ENCODE measurements at regions of chr12 and their contacts with region 1.

Region 1: DNA sequence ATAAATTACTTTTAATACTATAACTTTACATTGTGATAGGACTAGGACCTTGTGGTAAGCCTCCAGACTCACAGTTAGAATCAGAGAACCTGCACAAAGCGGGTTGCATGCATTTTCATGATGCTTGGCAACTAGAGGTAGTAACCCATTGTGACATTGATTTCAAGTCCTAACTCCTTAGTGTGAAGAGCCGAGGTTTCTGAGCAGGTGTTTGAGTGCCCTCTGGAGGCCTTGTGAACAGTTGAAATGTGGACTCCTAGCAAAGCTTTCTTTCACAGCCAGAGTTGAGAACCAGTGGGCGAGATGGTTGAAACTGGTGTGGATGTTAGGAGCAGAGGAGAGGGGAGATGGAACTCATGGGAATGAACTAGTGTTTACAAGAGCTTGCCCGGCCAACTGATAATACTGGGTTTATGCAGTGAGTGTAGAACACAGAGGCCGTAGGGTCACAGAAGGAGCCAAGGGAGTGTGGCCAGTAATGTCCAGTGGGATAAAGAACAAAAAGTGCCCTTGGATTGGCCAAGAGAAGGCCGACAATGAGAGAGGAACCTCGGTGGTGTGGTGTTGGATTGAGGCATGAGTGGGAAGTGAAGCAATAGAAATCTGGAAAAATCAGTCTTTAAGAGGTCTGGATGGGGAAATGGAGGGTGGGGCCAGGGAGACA is 10.9 kb downstream of the ZNF664 start:
- DNase-seq: peak; percentile 49 to 51
- H3K4me3 ChIP-seq: no peak overlapping the region
- H3K4me3 Mint-ChIP-seq: no peak overlapping the region
- H3K27ac Mint-ChIP-seq: no peak overlapping the region
- H3K4me1 ChIP-seq: peaks cover 3% of the 10 kb centered on the region; the same call in 1 of the 2 replicates
- H3K4me1 Mint-ChIP-seq: peaks cover 7% of the 10 kb centered on the region
- H3K27me3 ChIP-seq: no peaks in the 10 kb centered on the region
- H3K27me3 Mint-ChIP-seq: no peaks in the 10 kb centered on the region
- CTCF ChIP-seq: peak; percentile 53 to 73

Region 2: GRCh38 chr12:123761841-123762714 is 221.9 kb before region 1 on chr12 and contains the start of gene DNAH10:
- CTCF ChIA-PET with region 1: no interaction called
- POLR2A ChIA-PET with region 1: no interaction called
- intact Hi-C with region 1: no loop called
- DNase-seq: peak; percentile 87 to 90
- H3K4me3 ChIP-seq: peak within 1 kb of the TSS; percentile 84
- H3K4me3 Mint-ChIP-seq: peak within 1 kb of the TSS; percentile 68
- H3K27ac Mint-ChIP-seq: no peak within 1 kb of the TSS
- H3K4me1 ChIP-seq: peaks cover 6% of the 10 kb centered on the region
- H3K4me1 Mint-ChIP-seq: no peaks in the 10 kb centered on the region
- H3K27me3 ChIP-seq: no peaks in the 10 kb centered on the region
- H3K27me3 Mint-ChIP-seq: no peaks in the 10 kb centered on the region
- CTCF ChIP-seq: peak; percentile 61 to 77
- total RNA-seq, gene DNAH10: 0.16 and 0.45 TPM in 2 replicates

Region 3: GRCh38 chr12:123801573-123802178 is 182.3 kb before region 1 on chr12:
- CTCF ChIA-PET with region 1: interaction called, 6 read pairs
- POLR2A ChIA-PET with region 1: no interaction called
- intact Hi-C with region 1: loop called (anchors 2 kb)
- DNase-seq: no peak
- H3K4me3 ChIP-seq: no peak overlapping the region
- H3K4me3 Mint-ChIP-seq: no peak overlapping the region
- H3K27ac Mint-ChIP-seq: no peak overlapping the region
- H3K4me1 ChIP-seq: no peaks in the 10 kb centered on the region
- H3K4me1 Mint-ChIP-seq: no peaks in the 10 kb centered on the region
- H3K27me3 ChIP-seq: no peaks in the 10 kb centered on the region
- H3K27me3 Mint-ChIP-seq: peaks cover 6% of the 10 kb centered on the region
- CTCF ChIP-seq: peak in 1 of 2 experiments; percentile 40

Region 4: DNA sequence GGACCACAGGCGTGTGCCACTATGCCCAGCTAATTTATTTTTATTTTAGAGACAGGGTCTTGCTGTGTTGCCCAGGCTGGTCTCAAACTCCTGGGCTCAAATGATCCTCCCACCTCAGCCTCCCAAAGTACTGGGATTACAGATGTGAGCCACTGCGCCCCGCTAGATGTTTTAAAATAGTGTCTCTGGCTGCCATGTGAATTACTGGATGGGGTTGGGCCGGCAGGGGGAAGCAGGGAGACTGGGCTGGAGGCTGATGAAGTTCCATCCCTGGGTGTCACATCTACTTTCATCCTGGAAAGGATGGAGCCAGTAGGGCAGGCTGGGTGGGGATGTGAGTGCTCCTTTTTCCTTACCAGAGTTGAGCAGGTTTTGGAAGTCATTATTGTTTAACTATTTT is 175.8 kb before region 1 on chr12:
- CTCF ChIA-PET with region 1: no interaction called
- POLR2A ChIA-PET with region 1: no interaction called
- intact Hi-C with region 1: loop called (anchors 1 kb)
- DNase-seq: peak; percentile 49 to 64
- H3K4me3 ChIP-seq: no peak overlapping the region
- H3K4me3 Mint-ChIP-seq: no peak overlapping the region
- H3K27ac Mint-ChIP-seq: no peak overlapping the region
- H3K4me1 ChIP-seq: no peaks in the 10 kb centered on the region
- H3K4me1 Mint-ChIP-seq: no peaks in the 10 kb centered on the region
- H3K27me3 ChIP-seq: no peaks in the 10 kb centered on the region
- H3K27me3 Mint-ChIP-seq: peaks cover 6% of the 10 kb centered on the region
- CTCF ChIP-seq: peak; percentile 53 to 65

Region 5: DNA sequence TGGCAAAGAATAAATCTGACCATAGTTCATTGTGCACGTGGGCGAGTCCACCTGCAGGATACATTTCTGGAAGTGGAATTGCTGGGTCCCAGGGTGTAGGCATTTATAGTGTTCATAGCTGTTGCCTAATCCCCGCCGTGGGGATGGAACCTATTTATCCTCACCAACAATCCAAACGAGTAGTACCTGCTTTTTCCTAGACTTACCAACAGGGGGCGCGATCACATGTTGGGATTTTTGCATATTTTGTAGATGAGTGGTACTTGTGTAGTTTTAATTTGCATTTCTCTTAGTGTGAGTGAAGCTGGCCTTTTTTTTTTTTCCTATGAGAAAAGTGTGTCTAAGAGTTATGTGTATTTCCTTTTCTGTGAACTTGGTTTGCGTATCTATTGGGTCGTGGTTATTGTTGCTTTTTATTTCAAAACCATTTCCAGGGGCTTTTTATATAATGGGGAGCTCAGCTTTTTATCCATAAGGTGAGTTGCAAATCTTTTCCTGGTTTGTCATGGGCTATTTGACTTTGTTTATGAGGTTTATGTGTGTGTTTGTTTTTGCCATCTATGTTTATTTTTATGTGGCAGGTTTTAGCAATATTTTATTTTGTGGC is 78.5 kb before region 1 on chr12:
- CTCF ChIA-PET with region 1: interaction called, 4 read pairs
- POLR2A ChIA-PET with region 1: no interaction called
- intact Hi-C with region 1: loop called (anchors 1 kb)
- DNase-seq: peak; percentile 61 to 64
- H3K4me3 ChIP-seq: no peak overlapping the region
- H3K4me3 Mint-ChIP-seq: no peak overlapping the region
- H3K27ac Mint-ChIP-seq: no peak overlapping the region
- H3K4me1 ChIP-seq: no peaks in the 10 kb centered on the region
- H3K4me1 Mint-ChIP-seq: no peaks in the 10 kb centered on the region
- H3K27me3 ChIP-seq: no peaks in the 10 kb centered on the region
- H3K27me3 Mint-ChIP-seq: no peaks in the 10 kb centered on the region
- CTCF ChIP-seq: peak; percentile 51 to 66

Region 6: GRCh38 chr12:124217508-124218237 is 233.7 kb after region 1 on chr12:
- CTCF ChIA-PET with region 1: no interaction called
- POLR2A ChIA-PET with region 1: no interaction called
- intact Hi-C with region 1: no loop called
- DNase-seq: no peak
- H3K4me3 ChIP-seq: no peak overlapping the region
- H3K4me3 Mint-ChIP-seq: no peak overlapping the region
- H3K27ac Mint-ChIP-seq: no peak overlapping the region
- H3K4me1 ChIP-seq: no peaks in the 10 kb centered on the region
- H3K4me1 Mint-ChIP-seq: peaks cover 7% of the 10 kb centered on the region
- H3K27me3 ChIP-seq: no peaks in the 10 kb centered on the region
- H3K27me3 Mint-ChIP-seq: no peaks in the 10 kb centered on the region
- CTCF ChIP-seq: no peak